Activated B cell treated with CpG ODN at 0.5 μM for 24 hours (primary cell): ENCODE measurements at regions of chr4 and their contacts with region 1.

Region 1: GRCh38 chr4:38759113-38759789 is 23.5 kb downstream of the TLR10 start:
- DNase-seq: no peak
- ATAC-seq: no peak
- H3K4me3 Mint-ChIP-seq: peak overlapping the region; percentile 4
- H3K27ac Mint-ChIP-seq: peak overlapping the region; percentile 80
- H3K4me1 Mint-ChIP-seq: peaks cover 70% of the 10 kb centered on the region
- H3K27me3 Mint-ChIP-seq: no peaks in the 10 kb centered on the region
- CTCF ChIP-seq: no peak

Region 2: GRCh38 chr4:38179690-38180377 is 579.4 kb before region 1 on chr4:
- CTCF ChIA-PET with region 1: interaction called, 30 read pairs
- POLR2A ChIA-PET with region 1: no interaction called
- intact Hi-C with region 1: no loop called
- DNase-seq: peak; percentile 54
- ATAC-seq: peak; percentile 75
- H3K4me3 Mint-ChIP-seq: no peak overlapping the region
- H3K27ac Mint-ChIP-seq: peak overlapping the region; percentile 15
- H3K4me1 Mint-ChIP-seq: peaks cover 28% of the 10 kb centered on the region
- H3K27me3 Mint-ChIP-seq: peaks cover 6% of the 10 kb centered on the region
- CTCF ChIP-seq: peak; percentile 96

Region 3: DNA sequence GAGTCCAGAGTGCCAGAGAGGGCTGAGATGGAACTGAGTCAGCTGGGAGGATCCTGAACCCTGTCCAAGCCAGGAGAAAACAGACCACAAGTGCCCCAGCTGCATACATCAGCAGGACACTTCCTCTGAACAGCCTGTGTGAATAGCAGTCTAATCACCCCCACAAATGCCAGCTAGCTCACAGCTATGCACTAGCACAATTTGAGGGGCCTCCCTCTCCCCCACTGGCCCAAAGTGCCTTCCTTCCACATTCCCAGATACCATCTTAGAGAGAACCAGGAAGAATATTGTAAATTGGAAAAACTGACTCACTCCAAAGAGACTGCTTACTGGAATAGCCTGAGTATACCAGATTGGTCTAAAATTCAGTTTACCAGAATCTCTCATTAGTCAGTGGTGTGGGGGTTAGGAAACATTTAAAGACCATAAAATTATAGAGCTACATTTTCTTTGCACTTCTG is 387.8 kb before region 1 on chr4:
- CTCF ChIA-PET with region 1: no interaction called
- POLR2A ChIA-PET with region 1: no interaction called
- intact Hi-C with region 1: no loop called
- DNase-seq: no peak
- ATAC-seq: no peak
- H3K4me3 Mint-ChIP-seq: no peak overlapping the region
- H3K27ac Mint-ChIP-seq: no peak overlapping the region
- H3K4me1 Mint-ChIP-seq: peaks cover 3% of the 10 kb centered on the region
- H3K27me3 Mint-ChIP-seq: no peaks in the 10 kb centered on the region
- CTCF ChIP-seq: no peak

Region 4: DNA sequence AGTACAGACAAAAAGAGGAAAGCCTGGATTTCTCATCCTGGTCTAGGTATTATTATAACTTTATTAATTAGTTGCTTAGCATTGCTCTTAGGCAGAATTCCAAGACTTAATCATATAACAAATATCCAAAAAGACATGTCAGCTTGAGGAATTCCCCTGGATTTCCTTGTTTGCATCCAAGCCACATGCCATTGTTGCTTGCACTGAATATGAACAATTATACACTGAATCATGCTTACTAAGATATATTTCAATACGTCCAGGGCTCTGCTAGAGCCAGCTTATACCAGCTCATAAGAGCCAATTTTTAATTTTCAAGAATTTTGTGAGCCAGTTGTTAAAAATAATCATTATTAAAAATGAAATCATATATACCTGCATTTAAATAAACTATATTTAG is 29.1 kb after region 1 on chr4:
- CTCF ChIA-PET with region 1: interaction called, 331 read pairs
- POLR2A ChIA-PET with region 1: interaction called, 249 read pairs
- intact Hi-C with region 1: no loop called
- DNase-seq: no peak
- ATAC-seq: no peak
- H3K4me3 Mint-ChIP-seq: no peak overlapping the region
- H3K27ac Mint-ChIP-seq: no peak overlapping the region
- H3K4me1 Mint-ChIP-seq: peaks cover 38% of the 10 kb centered on the region
- H3K27me3 Mint-ChIP-seq: no peaks in the 10 kb centered on the region
- CTCF ChIP-seq: no peak

Region 5: GRCh38 chr4:38856524-38857337 is 97.5 kb after region 1 on chr4 and contains the start of gene TLR6:
- CTCF ChIA-PET with region 1: interaction called, 104 read pairs
- POLR2A ChIA-PET with region 1: interaction called, 86 read pairs
- intact Hi-C with region 1: loop called (anchors 1 kb)
- DNase-seq: no peak
- ATAC-seq: peak; percentile 42
- H3K4me3 Mint-ChIP-seq: peak within 1 kb of the TSS; percentile 82
- H3K27ac Mint-ChIP-seq: peak within 1 kb of the TSS; percentile 94
- H3K4me1 Mint-ChIP-seq: peaks cover 58% of the 10 kb centered on the region
- H3K27me3 Mint-ChIP-seq: no peaks in the 10 kb centered on the region
- CTCF ChIP-seq: peak; percentile 40
- total RNA-seq, gene TLR6: 59.1 and 64.7 TPM in 2 replicates

Region 6: DNA sequence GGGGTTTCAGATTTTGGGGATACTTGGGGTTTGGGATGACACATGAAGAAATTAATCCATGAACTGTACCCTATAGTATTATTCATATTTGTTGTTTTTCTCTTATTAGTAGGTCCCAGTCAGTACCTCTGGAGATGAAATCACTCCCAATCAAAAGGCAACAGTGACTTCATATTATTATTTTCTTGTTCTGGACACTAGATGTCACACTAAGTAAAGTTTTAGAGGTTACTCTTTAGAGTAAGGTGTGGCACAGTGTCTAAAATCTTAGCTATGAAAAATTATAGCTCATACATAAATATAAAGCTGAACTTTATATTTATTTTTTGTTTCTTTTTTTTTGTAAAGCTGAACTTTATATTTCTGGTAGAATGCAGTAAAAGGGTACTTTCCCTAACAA is 143.4 kb after region 1 on chr4:
- CTCF ChIA-PET with region 1: interaction called, 85 read pairs
- POLR2A ChIA-PET with region 1: interaction called, 3 read pairs
- intact Hi-C with region 1: loop called (anchors 1 kb)
- DNase-seq: no peak
- ATAC-seq: peak; percentile 71
- H3K4me3 Mint-ChIP-seq: no peak overlapping the region
- H3K27ac Mint-ChIP-seq: no peak overlapping the region
- H3K4me1 Mint-ChIP-seq: peaks cover 2% of the 10 kb centered on the region
- H3K27me3 Mint-ChIP-seq: no peaks in the 10 kb centered on the region
- CTCF ChIP-seq: peak; percentile 45

Region 7: GRCh38 chr4:39134683-39135319 is 375.6 kb after region 1 on chr4:
- CTCF ChIA-PET with region 1: interaction called, 68 read pairs
- POLR2A ChIA-PET with region 1: interaction called, 4 read pairs
- intact Hi-C with region 1: loop called (anchors 1 kb)
- DNase-seq: no peak
- ATAC-seq: no peak
- H3K4me3 Mint-ChIP-seq: no peak overlapping the region
- H3K27ac Mint-ChIP-seq: peak overlapping the region; percentile 4
- H3K4me1 Mint-ChIP-seq: peaks cover 12% of the 10 kb centered on the region
- H3K27me3 Mint-ChIP-seq: no peaks in the 10 kb centered on the region
- CTCF ChIP-seq: no peak